Activated B cell treated with CpG ODN at 0.5 μM for 24 hours (primary cell): ENCODE measurements at regions of chr6 and their contacts with region 1.

Region 1: DNA sequence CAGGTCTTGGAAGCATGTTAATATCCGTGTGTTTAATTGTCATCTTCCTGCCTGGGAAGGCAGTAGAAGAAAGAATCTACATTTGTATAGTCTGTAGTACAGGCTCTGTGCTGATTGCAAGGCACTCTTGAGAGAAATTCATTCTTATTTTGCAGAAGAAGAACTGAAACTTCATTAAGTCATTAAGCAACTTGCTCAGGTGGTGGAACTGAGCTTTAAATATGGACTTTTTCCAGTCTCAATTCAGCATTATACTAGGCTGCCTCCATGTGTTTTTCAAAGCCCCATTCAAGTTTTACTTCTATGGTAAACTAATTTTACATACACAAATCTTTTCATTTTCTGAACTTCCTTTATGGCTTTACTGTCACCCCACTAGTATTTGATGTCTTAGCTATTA is 18.7 kb downstream of the ZNF451 start:
- DNase-seq: no peak
- ATAC-seq: peak; percentile 86
- H3K4me3 Mint-ChIP-seq: peak overlapping the region; percentile 16
- H3K27ac Mint-ChIP-seq: peak overlapping the region; percentile 59
- H3K4me1 Mint-ChIP-seq: peaks cover 43% of the 10 kb centered on the region
- H3K27me3 Mint-ChIP-seq: no peaks in the 10 kb centered on the region
- CTCF ChIP-seq: no peak

Region 2: DNA sequence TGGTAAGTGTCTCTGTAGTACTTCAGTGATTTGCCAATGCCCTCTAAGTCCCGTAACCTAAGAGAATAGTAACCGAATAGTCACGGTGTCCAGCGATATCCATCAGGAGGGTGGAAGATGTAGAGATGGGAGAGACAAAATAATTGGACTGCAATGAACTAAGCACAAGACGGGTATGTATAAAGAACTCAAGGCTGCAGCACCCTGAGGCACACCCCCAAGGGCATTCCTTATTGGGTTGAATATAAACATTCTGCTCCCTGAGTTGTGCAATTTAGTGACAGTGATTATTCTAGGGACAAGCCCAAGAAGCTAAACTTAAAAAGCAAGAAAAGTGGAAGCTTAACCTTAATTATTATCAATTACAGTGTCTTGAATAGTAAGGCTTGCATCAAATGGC is 480.6 kb before region 1 on chr6:
- CTCF ChIA-PET with region 1: no interaction called
- POLR2A ChIA-PET with region 1: no interaction called
- intact Hi-C with region 1: no loop called
- DNase-seq: no peak
- ATAC-seq: no peak
- H3K4me3 Mint-ChIP-seq: no peak overlapping the region
- H3K27ac Mint-ChIP-seq: no peak overlapping the region
- H3K4me1 Mint-ChIP-seq: no peaks in the 10 kb centered on the region
- H3K27me3 Mint-ChIP-seq: no peaks in the 10 kb centered on the region
- CTCF ChIP-seq: no peak

Region 3: DNA sequence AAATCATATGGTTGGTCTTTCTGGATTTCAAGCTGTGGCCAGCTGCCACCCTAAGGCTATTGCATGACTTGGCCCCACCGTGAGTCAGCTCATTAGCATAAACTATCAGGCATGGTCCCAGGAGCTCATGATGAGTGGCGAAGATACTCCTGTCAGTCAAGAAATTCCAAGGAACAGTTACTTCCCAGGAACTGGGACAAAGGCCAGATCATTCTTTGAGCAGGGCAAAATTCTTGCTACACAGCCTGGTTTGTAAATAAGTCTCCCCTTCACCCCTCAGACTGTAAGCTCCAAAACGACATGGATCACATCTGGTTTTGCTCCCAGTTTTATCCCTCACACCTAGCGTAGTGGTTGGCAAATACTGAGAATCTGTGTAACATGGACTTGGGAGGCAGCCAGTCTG is 95.2 kb before region 1 on chr6:
- CTCF ChIA-PET with region 1: no interaction called
- POLR2A ChIA-PET with region 1: no interaction called
- intact Hi-C with region 1: no loop called
- DNase-seq: no peak
- ATAC-seq: no peak
- H3K4me3 Mint-ChIP-seq: no peak overlapping the region
- H3K27ac Mint-ChIP-seq: no peak overlapping the region
- H3K4me1 Mint-ChIP-seq: no peaks in the 10 kb centered on the region
- H3K27me3 Mint-ChIP-seq: peaks cover 12% of the 10 kb centered on the region
- CTCF ChIP-seq: no peak

Region 4: GRCh38 chr6:57089687-57090460 is 18.8 kb before region 1 on chr6 and contains the start of gene ZNF451:
- CTCF ChIA-PET with region 1: no interaction called
- POLR2A ChIA-PET with region 1: no interaction called
- intact Hi-C with region 1: loop called (anchors 1 kb)
- DNase-seq: peak; percentile 94
- ATAC-seq: peak; percentile 92
- H3K4me3 Mint-ChIP-seq: peak within 1 kb of the TSS; percentile 86
- H3K27ac Mint-ChIP-seq: peak within 1 kb of the TSS; percentile 87
- H3K4me1 Mint-ChIP-seq: peaks cover 31% of the 10 kb centered on the region
- H3K27me3 Mint-ChIP-seq: no peaks in the 10 kb centered on the region
- CTCF ChIP-seq: no peak
- total RNA-seq, gene ZNF451: 66.9 and 71.9 TPM in 2 replicates

Region 5: GRCh38 chr6:57130661-57131177 is 22.0 kb after region 1 on chr6:
- CTCF ChIA-PET with region 1: no interaction called
- POLR2A ChIA-PET with region 1: no interaction called
- intact Hi-C with region 1: loop called (anchors 2 kb)
- DNase-seq: no peak
- ATAC-seq: no peak
- H3K4me3 Mint-ChIP-seq: no peak overlapping the region
- H3K27ac Mint-ChIP-seq: no peak overlapping the region
- H3K4me1 Mint-ChIP-seq: peaks cover 3% of the 10 kb centered on the region
- H3K27me3 Mint-ChIP-seq: no peaks in the 10 kb centered on the region
- CTCF ChIP-seq: no peak

Region 6: DNA sequence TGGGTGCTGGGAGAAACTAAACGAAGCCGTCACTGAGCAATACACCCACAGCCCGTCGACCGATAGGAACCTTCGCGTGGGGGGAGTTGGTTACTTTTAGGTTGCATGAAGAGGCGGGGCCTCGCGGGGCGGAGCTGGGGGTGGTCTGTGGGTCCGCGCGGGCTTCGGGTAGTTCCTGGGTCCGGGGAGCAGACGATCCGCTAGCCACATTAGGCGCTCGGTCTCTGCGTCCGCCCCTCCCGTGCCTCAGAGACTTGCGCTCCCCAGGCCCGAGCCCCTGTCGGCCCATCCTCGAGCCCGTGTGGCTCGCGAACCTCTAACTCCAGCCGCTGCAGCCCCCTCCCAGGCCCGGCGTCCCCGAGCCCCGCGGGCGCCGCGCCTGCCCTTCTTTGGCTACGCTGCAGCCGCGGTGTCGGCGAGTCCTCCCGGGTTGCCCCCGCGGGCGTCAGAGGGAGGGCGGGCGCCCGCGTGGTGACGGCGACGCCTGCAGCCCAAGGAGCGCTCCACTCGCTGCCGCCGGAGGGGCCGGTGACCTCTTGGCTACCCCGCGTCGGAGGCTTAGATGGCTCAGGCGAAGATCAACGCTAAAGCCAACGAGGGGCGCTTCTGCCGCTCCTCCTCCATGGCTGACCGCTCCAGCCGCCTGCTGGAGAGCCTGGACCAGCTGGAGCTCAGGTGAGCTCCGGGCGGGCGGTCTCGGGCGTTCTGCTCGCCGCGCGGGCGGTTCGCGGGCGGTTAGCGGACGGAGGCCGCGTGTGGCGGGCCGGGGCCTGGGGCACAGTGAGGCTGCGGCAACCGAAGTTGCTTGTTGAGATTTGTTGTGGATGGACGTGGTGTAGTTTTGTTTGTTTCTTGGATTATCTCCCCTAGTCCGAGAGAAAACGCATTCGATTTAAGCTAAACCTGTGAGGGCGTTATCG is 63.7 kb after region 1 on chr6 and contains the start of gene BAG2:
- CTCF ChIA-PET with region 1: no interaction called
- POLR2A ChIA-PET with region 1: interaction called, 3 read pairs
- intact Hi-C with region 1: loop called (anchors 5 kb)
- DNase-seq: peak; percentile 86
- ATAC-seq: peak; percentile 87
- H3K4me3 Mint-ChIP-seq: peak within 1 kb of the TSS; percentile 92
- H3K27ac Mint-ChIP-seq: peak within 1 kb of the TSS; percentile 92
- H3K4me1 Mint-ChIP-seq: peaks cover 26% of the 10 kb centered on the region
- H3K27me3 Mint-ChIP-seq: no peaks in the 10 kb centered on the region
- CTCF ChIP-seq: no peak
- total RNA-seq, gene BAG2: 3.9 and 4.3 TPM in 2 replicates

Region 7: GRCh38 chr6:57190140-57190539 is 81.4 kb after region 1 on chr6:
- CTCF ChIA-PET with region 1: no interaction called
- POLR2A ChIA-PET with region 1: no interaction called
- intact Hi-C with region 1: no loop called
- DNase-seq: no peak
- ATAC-seq: no peak
- H3K4me3 Mint-ChIP-seq: no peak overlapping the region
- H3K27ac Mint-ChIP-seq: no peak overlapping the region
- H3K4me1 Mint-ChIP-seq: no peaks in the 10 kb centered on the region
- H3K27me3 Mint-ChIP-seq: no peaks in the 10 kb centered on the region
- CTCF ChIP-seq: no peak